HCT116 (cell line): ENCODE measurements at regions of chr2 and their contacts with region 1.

Region 1: DNA sequence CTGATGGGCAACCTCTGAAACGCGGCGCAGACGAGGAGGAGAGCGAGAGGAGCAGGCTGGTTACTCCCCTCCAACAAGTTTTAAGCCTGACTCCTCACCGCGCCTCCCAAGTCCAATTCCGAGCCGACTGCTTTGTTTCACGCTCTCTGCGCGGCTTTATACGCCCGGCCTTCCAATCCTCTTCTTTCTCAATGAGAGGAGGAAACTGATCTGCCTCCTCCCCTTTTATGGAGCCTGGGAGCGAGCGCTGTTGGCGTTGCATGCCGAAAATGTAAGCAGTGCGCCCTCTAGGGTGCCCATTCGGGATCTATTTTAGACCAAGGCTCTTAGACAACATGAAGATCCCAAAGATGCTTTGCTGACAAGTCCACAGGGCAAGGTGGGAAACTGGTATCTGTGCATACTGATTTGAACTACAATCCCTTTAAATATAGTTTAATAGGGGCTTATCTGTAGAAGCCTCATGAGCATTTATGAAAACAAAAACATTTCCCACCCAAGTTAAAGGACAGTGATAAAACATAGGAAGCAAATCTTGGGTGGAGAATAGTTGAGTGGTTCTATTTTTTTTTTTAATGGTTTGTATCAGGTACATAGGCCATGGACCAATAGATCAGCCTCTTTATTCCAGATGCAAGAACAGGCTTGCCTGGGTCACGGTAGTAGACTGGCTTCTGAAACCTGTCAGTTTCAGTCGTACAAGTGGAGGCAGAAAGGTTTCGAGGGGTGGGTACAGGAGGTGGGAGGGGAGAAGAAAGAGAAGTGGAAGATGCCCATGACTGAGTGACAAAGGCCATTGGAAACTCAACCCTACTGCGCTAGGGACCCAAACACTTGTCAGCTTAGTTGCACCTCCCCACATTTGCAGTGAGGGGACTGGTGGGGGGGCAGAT is at the start of gene RND3:
- DNase-seq: peak; percentile 98
- ATAC-seq: peak; percentile 72
- H3K4me3 ChIP-seq: peak within 1 kb of the TSS; percentile 83 to 87
- H3K27ac ChIP-seq: peak within 1 kb of the TSS; percentile 77
- H3K4me1 ChIP-seq: peaks cover 2 to 30% of the 10 kb centered on the region in 2 experiments
- H3K27me3 ChIP-seq: no peaks in the 10 kb centered on the region
- CTCF ChIP-seq: peak; percentile 75 to 91 (median 79); a peak in 5 of 6 replicates
- POLR2A ChIP-seq: peak; percentile 99
- RAD21 ChIP-seq: peak; percentile 95
- total RNA-seq, gene RND3: 15.0 TPM

Region 2: GRCh38 chr2:149597668-149598326 is 890.0 kb before region 1 on chr2:
- CTCF ChIA-PET with region 1: no interaction called
- POLR2A ChIA-PET with region 1: no interaction called
- RAD21 ChIA-PET with region 1: no interaction called
- intact Hi-C with region 1: loop called (anchors 1 kb)
- DNase-seq: peak; percentile 54
- ATAC-seq: peak; percentile 92
- H3K4me3 ChIP-seq: 0 out of 4 replicates have a peak overlapping the region, but pooled peaks of 1 of the 2 experiments have one; percentile 3
- H3K27ac ChIP-seq: no peak overlapping the region
- H3K4me1 ChIP-seq: peaks cover 0 to 10% of the 10 kb centered on the region in 2 experiments; a peak in 2 of 4 replicates
- H3K27me3 ChIP-seq: no peaks in the 10 kb centered on the region
- CTCF ChIP-seq: peak; percentile 73 to 82 (median 76); a peak in 5 of 6 replicates
- POLR2A ChIP-seq: no peak
- RAD21 ChIP-seq: peak; percentile 92

Region 3: DNA sequence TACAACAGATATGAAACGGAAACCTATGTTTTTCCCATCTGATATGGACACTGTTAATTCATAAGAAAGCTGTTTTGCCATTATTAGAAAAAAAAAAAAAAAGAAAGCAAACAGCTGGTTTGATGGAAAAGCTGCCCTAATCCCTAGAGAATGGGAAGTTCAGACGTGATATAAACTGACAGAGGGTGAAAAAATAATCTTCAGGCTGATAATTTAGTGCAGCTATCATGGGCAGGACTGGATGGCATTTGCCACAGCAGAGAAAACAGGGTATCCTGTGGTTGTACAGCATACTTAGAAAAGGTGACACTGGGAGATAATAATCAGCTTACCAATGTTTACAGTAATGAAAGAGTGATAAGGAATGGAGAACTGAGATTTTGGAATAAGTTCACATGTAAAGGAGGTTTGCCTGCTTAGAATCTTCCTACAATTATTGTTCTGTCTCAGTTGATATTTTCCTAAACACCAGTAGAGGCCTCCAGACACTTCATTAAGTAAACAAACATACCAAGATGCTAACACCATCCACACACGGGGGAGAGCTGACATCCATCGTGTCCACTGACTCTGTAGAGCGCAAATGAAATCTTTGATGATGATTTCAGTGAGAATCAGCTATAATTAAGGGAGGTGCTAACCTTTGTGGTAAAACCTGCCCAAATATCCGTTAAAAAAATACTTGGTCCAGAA is 688.6 kb before region 1 on chr2:
- CTCF ChIA-PET with region 1: no interaction called
- POLR2A ChIA-PET with region 1: no interaction called
- RAD21 ChIA-PET with region 1: interaction called in 1 of 2 experiments, 3 read pairs
- intact Hi-C with region 1: loop called (anchors 2 kb)
- DNase-seq: peak; percentile 2
- ATAC-seq: peak; percentile 80
- H3K4me3 ChIP-seq: no peak overlapping the region
- H3K27ac ChIP-seq: no peak overlapping the region
- H3K4me1 ChIP-seq: no peaks in the 10 kb centered on the region
- H3K27me3 ChIP-seq: no peaks in the 10 kb centered on the region
- CTCF ChIP-seq: peak in 2 of 3 experiments; percentile 49 to 51; a peak in 3 of 6 replicates
- POLR2A ChIP-seq: no peak
- RAD21 ChIP-seq: peak; percentile 77

Region 4: DNA sequence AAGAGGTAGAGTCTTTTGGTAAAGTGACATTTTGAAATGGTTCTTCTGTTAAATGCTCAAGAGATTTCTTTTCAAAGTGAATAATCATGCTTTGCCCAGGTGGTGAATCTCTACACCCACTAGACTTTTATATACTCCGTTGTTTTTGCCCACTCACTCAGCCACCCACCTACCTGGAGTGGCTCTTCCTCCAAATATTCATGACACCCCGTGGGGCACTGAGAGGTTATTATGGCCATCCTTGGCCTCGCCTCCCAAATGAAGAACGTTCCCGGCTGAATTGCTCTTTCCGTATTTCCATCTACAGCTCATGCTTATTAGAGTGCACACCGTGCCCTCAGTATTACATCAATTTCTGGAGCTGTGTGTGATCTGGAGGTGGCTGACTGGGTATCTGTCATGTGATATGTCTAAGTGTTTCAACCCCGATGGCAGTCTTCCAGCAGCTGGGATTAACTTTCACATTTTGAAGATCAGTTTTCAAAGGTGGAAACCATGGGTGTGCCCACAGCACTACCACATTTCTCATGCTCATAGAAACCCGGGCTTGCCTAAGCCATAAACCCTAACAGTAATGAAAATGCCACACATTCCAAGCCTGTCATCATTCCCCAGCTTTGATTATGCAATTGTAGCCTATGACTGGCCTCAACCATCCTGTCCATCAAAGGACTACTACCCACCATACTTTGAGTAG is 493.6 kb before region 1 on chr2:
- CTCF ChIA-PET with region 1: no interaction called
- POLR2A ChIA-PET with region 1: no interaction called
- RAD21 ChIA-PET with region 1: no interaction called
- intact Hi-C with region 1: loop called (anchors 10 kb)
- DNase-seq: peak; percentile 73
- ATAC-seq: peak; percentile 93
- H3K4me3 ChIP-seq: 0 out of 4 replicates have a peak overlapping the region, but pooled peaks of 1 of the 2 experiments have one; percentile 8
- H3K27ac ChIP-seq: no peak overlapping the region
- H3K4me1 ChIP-seq: peaks cover 12 to 26% of the 10 kb centered on the region in 2 experiments; a peak in 3 of 4 replicates
- H3K27me3 ChIP-seq: no peaks in the 10 kb centered on the region
- CTCF ChIP-seq: no peak
- POLR2A ChIP-seq: no peak
- RAD21 ChIP-seq: no peak

Region 5: DNA sequence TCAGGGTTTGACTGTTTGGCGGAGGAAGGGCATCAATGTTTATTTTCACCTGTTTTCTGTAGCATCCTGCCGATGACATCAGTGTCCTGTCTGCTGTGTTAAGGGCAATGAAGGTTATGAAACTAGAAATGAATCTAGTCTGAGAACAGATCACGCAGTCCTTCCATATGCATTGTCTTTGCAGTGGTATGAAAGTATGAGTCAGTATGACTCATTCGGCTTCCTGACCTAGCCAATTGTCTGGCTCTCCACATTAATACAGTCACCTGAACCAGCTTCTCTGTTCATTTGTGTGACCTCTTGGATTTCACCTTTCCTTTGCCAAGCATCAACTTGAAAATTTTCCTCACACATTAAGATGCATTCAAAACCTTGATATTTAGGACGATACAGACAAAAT is 354.2 kb before region 1 on chr2:
- CTCF ChIA-PET with region 1: no interaction called
- POLR2A ChIA-PET with region 1: no interaction called
- RAD21 ChIA-PET with region 1: no interaction called
- intact Hi-C with region 1: loop called (anchors 5 kb)
- DNase-seq: peak; percentile 74
- ATAC-seq: peak; percentile 98
- H3K4me3 ChIP-seq: no peak overlapping the region
- H3K27ac ChIP-seq: no peak overlapping the region
- H3K4me1 ChIP-seq: peaks cover 9 to 14% of the 10 kb centered on the region in 2 experiments
- H3K27me3 ChIP-seq: no peaks in the 10 kb centered on the region
- CTCF ChIP-seq: no peak
- POLR2A ChIP-seq: no peak
- RAD21 ChIP-seq: no peak

Region 6: DNA sequence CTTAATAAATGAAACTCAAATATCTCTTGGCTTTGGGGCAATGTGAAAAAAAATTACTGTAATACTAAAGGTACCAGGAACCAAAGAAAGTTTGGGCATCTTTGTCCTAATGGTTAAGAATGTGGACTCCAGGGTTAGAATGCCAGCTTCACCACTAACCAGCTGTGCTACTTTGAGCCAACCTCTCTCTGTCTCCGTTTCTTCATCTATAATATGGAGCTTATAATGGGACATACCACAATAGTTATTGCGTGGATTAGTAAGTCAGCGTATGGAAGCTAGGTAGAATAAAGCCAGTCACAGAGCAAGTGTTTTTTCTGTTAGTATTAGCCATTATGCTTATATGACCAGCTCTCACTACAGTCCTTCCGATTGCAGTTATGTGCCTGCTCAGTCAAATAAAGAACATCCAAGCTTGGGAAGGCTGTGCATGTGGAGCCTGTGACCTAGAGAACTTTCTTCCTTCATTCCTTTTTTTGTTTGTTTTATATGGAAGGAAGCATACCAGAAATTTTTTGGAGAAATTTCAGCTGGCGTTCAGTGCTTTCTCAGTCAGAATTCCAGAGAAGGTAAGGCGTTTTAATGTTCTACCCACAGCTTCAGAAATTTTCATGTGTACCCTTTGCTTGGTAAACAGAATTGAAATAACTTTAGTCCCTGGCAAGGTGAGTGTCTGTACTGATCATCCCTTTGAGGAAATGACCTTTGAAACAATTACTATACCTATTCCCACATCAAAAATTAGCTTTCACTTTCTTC is 113.7 kb after region 1 on chr2:
- CTCF ChIA-PET with region 1: no interaction called
- POLR2A ChIA-PET with region 1: no interaction called
- RAD21 ChIA-PET with region 1: no interaction called
- intact Hi-C with region 1: loop called (anchors 5 kb)
- DNase-seq: no peak
- ATAC-seq: no peak
- H3K4me3 ChIP-seq: no peak overlapping the region
- H3K27ac ChIP-seq: no peak overlapping the region
- H3K4me1 ChIP-seq: no peaks in the 10 kb centered on the region
- H3K27me3 ChIP-seq: no peaks in the 10 kb centered on the region
- CTCF ChIP-seq: no peak
- POLR2A ChIP-seq: no peak
- RAD21 ChIP-seq: no peak

Region 7: DNA sequence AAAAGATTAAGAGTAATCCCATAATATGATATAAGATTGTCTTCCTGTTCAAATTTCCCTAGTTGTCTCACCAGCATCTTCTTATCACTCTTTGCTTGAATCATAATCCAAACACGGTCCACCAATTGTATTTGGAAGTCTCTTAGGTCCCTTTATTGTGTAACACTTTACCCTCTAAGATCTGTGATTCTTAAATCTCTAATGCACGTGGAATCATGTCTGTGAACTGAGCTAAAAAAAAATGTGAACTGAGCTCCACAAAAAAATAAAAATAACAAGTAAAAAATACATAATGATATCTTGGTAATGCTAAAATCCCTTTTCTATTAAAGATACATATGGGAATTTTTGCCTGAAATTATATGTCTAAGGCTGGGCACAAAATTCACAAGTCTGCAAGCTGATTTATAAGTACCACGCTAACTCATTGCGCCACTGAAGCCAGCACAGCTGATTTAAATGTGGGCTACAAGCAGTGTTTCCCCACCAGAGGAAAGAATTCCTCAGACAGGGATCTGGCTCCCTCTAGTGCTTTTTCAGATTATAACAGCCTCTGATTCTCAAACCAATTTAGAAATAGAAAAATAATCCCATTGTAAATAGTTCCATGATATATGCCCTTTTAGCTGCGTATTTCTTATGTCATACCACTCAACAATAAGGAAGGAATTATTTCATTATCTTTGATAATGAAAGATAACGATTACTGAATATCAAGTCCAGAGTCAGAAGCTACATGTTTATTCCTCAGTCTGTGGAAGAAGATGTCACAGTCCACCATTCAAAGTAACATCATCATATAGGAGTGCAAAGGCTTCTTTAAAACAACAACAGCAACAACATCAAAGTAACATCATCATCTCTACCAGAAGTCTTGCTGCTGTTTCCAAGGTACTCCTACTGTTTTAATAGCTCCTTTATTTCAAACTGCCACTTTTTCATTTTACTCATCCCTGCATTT is 751.0 kb after region 1 on chr2:
- CTCF ChIA-PET with region 1: no interaction called
- POLR2A ChIA-PET with region 1: no interaction called
- RAD21 ChIA-PET with region 1: no interaction called
- intact Hi-C with region 1: loop called (anchors 5 kb)
- DNase-seq: peak; percentile 45
- ATAC-seq: peak; percentile 86
- H3K4me3 ChIP-seq: no peak overlapping the region
- H3K27ac ChIP-seq: no peak overlapping the region
- H3K4me1 ChIP-seq: no peaks in the 10 kb centered on the region; a peak in 1 of 4 replicates
- H3K27me3 ChIP-seq: no peaks in the 10 kb centered on the region
- CTCF ChIP-seq: peak; percentile 74 to 87 (median 75)
- POLR2A ChIP-seq: no peak
- RAD21 ChIP-seq: peak; percentile 90